Thyroid gland (tissue), 4 donors: ENCODE measurements at regions of chr9 and their contacts with region 1.

Region 1: DNA sequence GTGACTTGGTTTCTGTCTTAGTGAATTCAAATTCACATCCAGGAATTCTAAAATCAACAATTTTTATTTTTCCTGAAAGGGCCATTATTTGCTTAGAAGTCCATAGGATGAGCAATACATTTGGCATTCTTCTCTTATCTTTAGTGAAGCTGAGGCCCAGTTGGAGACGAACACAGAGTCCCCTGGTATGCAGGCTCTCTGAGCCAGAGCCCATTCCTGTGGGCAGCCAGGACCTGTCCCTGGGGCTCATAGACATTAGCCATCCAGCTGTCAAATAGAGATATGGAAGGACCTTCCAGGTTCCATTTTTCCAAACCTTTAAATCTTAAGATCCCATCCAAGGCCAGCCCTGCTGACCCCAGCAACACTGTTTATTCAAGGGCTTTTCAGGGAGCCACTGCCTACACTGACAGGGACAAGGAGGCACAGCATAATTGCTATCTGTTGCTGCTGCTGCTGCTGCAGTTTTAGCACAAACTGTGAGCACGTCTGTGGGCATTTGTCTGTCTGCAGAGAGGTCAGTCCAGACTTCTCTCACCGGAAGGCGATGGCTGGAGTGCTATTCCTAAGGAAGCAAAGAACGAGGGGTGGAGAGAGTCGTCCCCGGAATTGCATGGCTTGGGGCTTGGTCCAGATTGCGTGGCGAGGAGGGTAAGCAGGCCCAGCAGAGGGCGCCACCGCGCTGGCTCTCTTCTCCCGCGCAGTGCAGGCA is 639.0 kb downstream of the CCDC171 start:
- DNase-seq: peak; percentile 79 to 84
- H3K4me3 ChIP-seq: no peak overlapping the region
- H3K27ac ChIP-seq: no peak overlapping the region
- H3K4me1 ChIP-seq: peaks cover 9 to 17% of the 10 kb centered on the region in 2 donors
- H3K27me3 ChIP-seq: no peaks in the 10 kb centered on the region
- CTCF ChIP-seq: peak; percentile 52 to 88 (median 76)
- POLR2A ChIP-seq: no peak

Region 2: GRCh38 chr9:15697446-15697851 is 494.4 kb before region 1 on chr9:
- intact Hi-C with region 1: no loop called
- DNase-seq: no peak
- H3K4me3 ChIP-seq: no peak overlapping the region
- H3K27ac ChIP-seq: no peak overlapping the region
- H3K4me1 ChIP-seq: peaks cover 0 to 7% of the 10 kb centered on the region in 2 donors
- H3K27me3 ChIP-seq: no peaks in the 10 kb centered on the region
- CTCF ChIP-seq: no peak
- POLR2A ChIP-seq: no peak

Region 3: GRCh38 chr9:16275795-16276624 is 84.2 kb after region 1 on chr9:
- intact Hi-C with region 1: loop called (anchors 10 kb)
- DNase-seq: peak; percentile 98 to 99
- H3K4me3 ChIP-seq: no peak overlapping the region
- H3K27ac ChIP-seq: peak overlapping the region; percentile 88 to 93 (median 92)
- H3K4me1 ChIP-seq: peaks cover 23 to 46% of the 10 kb centered on the region in 2 donors
- H3K27me3 ChIP-seq: no peaks in the 10 kb centered on the region
- CTCF ChIP-seq: no peak
- POLR2A ChIP-seq: peak in 1 of 2 donors; percentile 25